Activated CD4-positive, alpha-beta memory T cell treated with anti-CD3 and anti-CD28 coated beads, Interleukin-2, amount 10 ng/mL, durations not matched to agents 7 days and 5 days (primary cell): ENCODE measurements at regions of chr15 and their contacts with region 1.

Region 1: GRCh38 chr15:75453703-75454470 is 2.4 kb upstream of the SIN3A start:
- DNase-seq: peak; percentile 98
- H3K4me3 Mint-ChIP-seq: peak overlapping the region; percentile 92
- H3K27ac Mint-ChIP-seq: peak overlapping the region; percentile 99
- H3K4me1 Mint-ChIP-seq: peaks cover 27% of the 10 kb centered on the region
- H3K27me3 Mint-ChIP-seq: no peaks in the 10 kb centered on the region

Region 2: GRCh38 chr15:75023181-75023871 is 430.6 kb before region 1 on chr15 and contains the start of gene PPCDC:
- CTCF ChIA-PET with region 1: no interaction called
- POLR2A ChIA-PET with region 1: interaction called, 16 read pairs
- DNase-seq: peak; percentile 97
- H3K4me3 Mint-ChIP-seq: peak within 1 kb of the TSS; percentile 94
- H3K27ac Mint-ChIP-seq: peak within 1 kb of the TSS; percentile 83
- H3K4me1 Mint-ChIP-seq: peaks cover 18% of the 10 kb centered on the region
- H3K27me3 Mint-ChIP-seq: no peaks in the 10 kb centered on the region
- total RNA-seq, gene PPCDC: 43.0 to 50.2 TPM

Region 3: DNA sequence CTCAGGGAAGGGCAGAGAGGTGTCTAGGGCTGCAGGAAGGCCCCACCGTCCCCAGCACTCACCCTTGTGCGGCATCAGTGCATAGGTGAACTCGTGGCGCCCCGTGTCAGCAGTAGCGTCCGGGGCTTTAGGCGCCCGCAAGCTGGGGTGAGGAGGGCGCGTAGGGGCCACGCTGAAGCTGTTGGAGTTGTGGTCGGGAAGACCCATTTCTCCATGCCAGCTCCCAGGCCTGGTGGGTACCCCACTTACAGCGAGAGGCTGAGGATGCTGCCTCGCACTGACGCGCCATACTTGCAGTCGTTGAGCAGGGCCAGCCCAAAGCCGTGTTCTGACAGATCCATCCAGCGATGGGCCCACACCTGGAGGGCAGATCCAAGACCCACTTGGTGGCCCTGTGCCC is 97.3 kb before region 1 on chr15:
- CTCF ChIA-PET with region 1: no interaction called
- POLR2A ChIA-PET with region 1: no interaction called
- DNase-seq: no peak
- H3K4me3 Mint-ChIP-seq: no peak overlapping the region
- H3K27ac Mint-ChIP-seq: no peak overlapping the region
- H3K4me1 Mint-ChIP-seq: peaks cover 4% of the 10 kb centered on the region
- H3K27me3 Mint-ChIP-seq: no peaks in the 10 kb centered on the region

Region 4: GRCh38 chr15:75367913-75368688 is 85.8 kb before region 1 on chr15 and contains the start of gene MAN2C1:
- CTCF ChIA-PET with region 1: interaction called, 109 read pairs
- POLR2A ChIA-PET with region 1: interaction called, 174 read pairs
- DNase-seq: peak; percentile 93
- H3K4me3 Mint-ChIP-seq: peak within 1 kb of the TSS; percentile 93
- H3K27ac Mint-ChIP-seq: peak within 1 kb of the TSS; percentile 96
- H3K4me1 Mint-ChIP-seq: peaks cover 33% of the 10 kb centered on the region
- H3K27me3 Mint-ChIP-seq: no peaks in the 10 kb centered on the region
- total RNA-seq, gene MAN2C1: 174 to 196 TPM

Region 5: DNA sequence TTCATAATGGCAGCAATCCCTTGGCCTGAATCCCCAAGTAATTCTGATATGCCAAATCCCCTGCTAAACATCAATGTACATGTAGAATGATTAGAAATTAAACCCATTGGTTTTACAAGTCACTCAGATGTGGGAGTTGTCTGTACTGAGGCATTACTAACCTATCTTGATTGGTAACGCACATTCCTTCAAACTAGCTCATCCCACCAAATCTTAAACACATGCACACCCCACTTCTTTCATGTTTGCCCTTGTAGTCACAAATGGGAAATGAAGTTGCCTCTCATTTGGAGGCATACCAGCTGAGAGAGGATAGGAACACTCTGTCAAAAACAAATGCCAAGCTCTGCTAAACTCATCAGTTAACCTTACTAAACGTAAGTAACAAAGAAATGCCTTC is 56.4 kb before region 1 on chr15:
- CTCF ChIA-PET with region 1: interaction called, 3 read pairs
- POLR2A ChIA-PET with region 1: interaction called, 13 read pairs
- DNase-seq: no peak
- H3K4me3 Mint-ChIP-seq: no peak overlapping the region
- H3K27ac Mint-ChIP-seq: no peak overlapping the region
- H3K4me1 Mint-ChIP-seq: peaks cover 9% of the 10 kb centered on the region
- H3K27me3 Mint-ChIP-seq: no peaks in the 10 kb centered on the region

Region 6: GRCh38 chr15:75468913-75469598 is 15.2 kb after region 1 on chr15:
- CTCF ChIA-PET with region 1: interaction called, 8 read pairs
- POLR2A ChIA-PET with region 1: interaction called, 20 read pairs
- DNase-seq: no peak
- H3K4me3 Mint-ChIP-seq: no peak overlapping the region
- H3K27ac Mint-ChIP-seq: no peak overlapping the region
- H3K4me1 Mint-ChIP-seq: peaks cover 5% of the 10 kb centered on the region
- H3K27me3 Mint-ChIP-seq: no peaks in the 10 kb centered on the region

Region 7: DNA sequence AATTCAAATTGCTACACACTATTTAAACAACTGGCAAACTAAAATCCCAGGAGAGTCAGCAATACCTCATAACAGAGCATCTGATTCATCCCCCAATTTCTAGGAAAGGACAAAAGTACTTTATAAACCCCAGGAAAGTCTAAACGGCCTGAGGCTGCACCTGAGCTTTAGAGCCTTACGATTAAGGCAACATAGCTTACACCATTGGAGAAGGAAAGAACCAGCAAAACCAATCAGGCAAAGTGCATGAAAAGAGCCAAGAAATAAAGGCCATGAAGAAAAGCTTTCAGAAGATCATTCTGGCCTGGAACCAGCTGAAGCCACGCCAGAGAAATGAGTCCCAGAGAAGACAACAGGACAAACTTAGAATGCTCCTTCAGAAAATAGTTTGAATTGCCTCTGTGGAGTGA is 77.2 kb after region 1 on chr15:
- CTCF ChIA-PET with region 1: no interaction called
- POLR2A ChIA-PET with region 1: no interaction called
- DNase-seq: no peak
- H3K4me3 Mint-ChIP-seq: no peak overlapping the region
- H3K27ac Mint-ChIP-seq: no peak overlapping the region
- H3K4me1 Mint-ChIP-seq: peaks cover 13% of the 10 kb centered on the region
- H3K27me3 Mint-ChIP-seq: no peaks in the 10 kb centered on the region

Region 8: GRCh38 chr15:75597667-75598341 is 143.9 kb after region 1 on chr15:
- CTCF ChIA-PET with region 1: interaction called, 3 read pairs
- POLR2A ChIA-PET with region 1: interaction called, 34 read pairs
- DNase-seq: peak; percentile 77
- H3K4me3 Mint-ChIP-seq: peak overlapping the region; percentile 53
- H3K27ac Mint-ChIP-seq: peak overlapping the region; percentile 96
- H3K4me1 Mint-ChIP-seq: peaks cover 50% of the 10 kb centered on the region
- H3K27me3 Mint-ChIP-seq: no peaks in the 10 kb centered on the region

Region 9: DNA sequence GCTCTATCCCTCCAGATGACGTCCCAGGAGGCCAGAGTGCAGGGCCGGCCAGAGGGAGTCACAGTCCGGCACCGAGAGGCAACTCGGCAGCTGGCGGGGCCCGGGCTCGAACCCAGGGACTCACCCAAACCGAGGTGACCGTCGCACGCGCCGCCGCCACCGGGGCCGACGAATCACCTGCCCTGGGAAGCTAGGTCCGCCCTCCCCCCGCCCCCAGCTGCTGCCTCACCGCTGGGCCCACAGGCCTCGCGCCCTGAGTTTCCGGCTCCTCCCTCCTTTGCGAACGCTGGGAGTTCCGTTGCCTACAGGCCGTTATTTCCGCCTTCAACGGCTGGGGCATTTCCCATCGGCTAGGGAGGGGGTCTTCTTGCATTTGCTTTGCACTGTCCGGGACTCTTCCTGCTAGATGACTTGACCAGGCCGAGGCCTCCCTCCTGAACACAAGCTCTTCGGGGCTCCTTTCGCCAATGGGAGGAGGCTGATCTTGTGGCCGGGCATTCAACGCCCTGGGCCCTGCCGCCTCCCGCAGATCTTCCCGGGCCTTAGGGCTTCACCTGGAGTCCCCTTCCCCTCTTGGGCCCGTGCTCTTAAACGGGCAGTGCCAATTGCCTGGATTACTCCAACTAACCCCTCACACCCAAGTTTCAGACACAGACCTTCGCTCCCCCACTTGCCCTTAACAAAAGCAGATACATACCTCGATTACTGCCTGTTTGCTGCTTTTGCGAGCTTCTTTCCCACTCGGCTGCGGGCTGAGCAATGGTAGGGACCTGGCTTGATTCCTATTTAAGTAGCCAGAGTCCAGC is 171.9 kb after region 1 on chr15 and contains the start of gene SNUPN:
- CTCF ChIA-PET with region 1: interaction called, 8 read pairs
- POLR2A ChIA-PET with region 1: interaction called, 99 read pairs
- DNase-seq: peak; percentile 96
- H3K4me3 Mint-ChIP-seq: peak within 1 kb of the TSS; percentile 93
- H3K27ac Mint-ChIP-seq: peak within 1 kb of the TSS; percentile 96
- H3K4me1 Mint-ChIP-seq: peaks cover 38% of the 10 kb centered on the region
- H3K27me3 Mint-ChIP-seq: no peaks in the 10 kb centered on the region
- total RNA-seq, gene SNUPN: 29.6 to 30.9 TPM